ENCODE measurements at regions of chr10 and their contacts with region 1.

Region 1: GRCh38 chr10:102009801-102010425 is 46.1 kb downstream of the ARMH3 start:
- DNase-seq: peak in 1 of 3 donors; percentile 59
- ATAC-seq: peak; percentile 97
- H3K4me3 ChIP-seq: no peak overlapping the region
- H3K4me1 ChIP-seq: no peaks in the 10 kb centered on the region
- CTCF ChIP-seq: peak; percentile 63

Region 2: DNA sequence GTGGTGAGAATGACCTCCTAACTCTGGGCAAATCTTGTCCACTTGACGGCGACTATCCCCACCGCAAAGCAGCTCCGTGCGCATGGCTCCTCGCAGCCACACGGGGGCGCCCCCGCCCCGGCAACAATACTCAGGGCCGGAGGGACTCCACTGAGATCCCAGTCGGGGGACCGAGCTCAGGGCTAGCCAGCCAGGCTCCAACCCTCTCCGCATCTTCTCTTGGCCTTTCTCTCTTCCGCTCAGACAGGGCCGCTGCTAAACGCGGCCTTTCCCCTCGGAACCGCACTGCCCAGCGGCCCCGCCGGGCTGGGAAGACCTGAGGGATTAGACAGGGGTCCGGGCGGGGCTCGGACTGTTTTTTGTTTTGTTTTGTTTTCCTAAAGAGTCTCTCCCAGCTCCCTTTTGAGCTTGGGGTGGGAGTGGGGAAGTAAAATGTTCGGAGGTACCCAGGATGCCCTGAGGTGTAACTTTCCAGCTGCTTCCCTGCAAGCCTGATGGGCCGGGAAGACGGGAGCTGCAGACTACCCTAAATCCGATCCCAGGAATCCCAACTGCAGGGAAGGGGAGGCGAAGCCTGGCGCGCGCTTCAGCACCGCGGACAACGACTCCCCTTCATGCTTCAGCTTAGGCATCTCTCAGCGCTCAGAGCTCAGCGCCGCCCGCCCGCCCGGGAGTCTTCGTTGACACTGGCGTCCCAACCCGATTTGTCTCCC is 169.0 kb before region 1 on chr10:
- intact Hi-C with region 1: loop called in 1 of 2 experiments (anchors 10 kb)
- DNase-seq: peak; percentile 83 to 84 (median 83)
- ATAC-seq: peak; percentile 90
- H3K4me3 ChIP-seq: no peak overlapping the region
- H3K4me1 ChIP-seq: peaks cover 12% of the 10 kb centered on the region
- CTCF ChIP-seq: peak; percentile 91

Region 3: GRCh38 chr10:101889256-101890210 is 120.4 kb before region 1 on chr10:
- intact Hi-C with region 1: loop called in 1 of 2 experiments (anchors 10 kb)
- DNase-seq: peak in 2 of 3 donors; percentile 68 to 90
- ATAC-seq: peak; percentile 82
- H3K4me3 ChIP-seq: no peak overlapping the region
- H3K4me1 ChIP-seq: no peaks in the 10 kb centered on the region
- CTCF ChIP-seq: peak; percentile 58